ENCODE measurements at regions of chr16 and their contacts with region 1.

Region 1: GRCh38 chr16:56600398-56600999 is 7.9 kb upstream of the MT2A start:
- DNase-seq: peak; percentile 60
- ATAC-seq: peak; percentile 72
- H3K4me3 Mint-ChIP-seq: no peak overlapping the region
- H3K27ac Mint-ChIP-seq: no peak overlapping the region
- H3K4me1 Mint-ChIP-seq: peaks cover 7% of the 10 kb centered on the region
- H3K27me3 Mint-ChIP-seq: peaks cover 16% of the 10 kb centered on the region

Region 2: GRCh38 chr16:56115817-56116576 is 484.5 kb before region 1 on chr16:
- CTCF ChIA-PET with region 1: no interaction called
- POLR2A ChIA-PET with region 1: no interaction called
- DNase-seq: no peak
- ATAC-seq: no peak
- H3K4me3 Mint-ChIP-seq: no peak overlapping the region
- H3K27ac Mint-ChIP-seq: no peak overlapping the region
- H3K4me1 Mint-ChIP-seq: peaks cover 5% of the 10 kb centered on the region
- H3K27me3 Mint-ChIP-seq: peaks cover 20% of the 10 kb centered on the region

Region 3: GRCh38 chr16:56294579-56294978 is 305.9 kb before region 1 on chr16:
- CTCF ChIA-PET with region 1: no interaction called
- POLR2A ChIA-PET with region 1: no interaction called
- DNase-seq: no peak
- ATAC-seq: no peak
- H3K4me3 Mint-ChIP-seq: no peak overlapping the region
- H3K27ac Mint-ChIP-seq: no peak overlapping the region
- H3K4me1 Mint-ChIP-seq: no peaks in the 10 kb centered on the region
- H3K27me3 Mint-ChIP-seq: peaks cover 2% of the 10 kb centered on the region

Region 4: GRCh38 chr16:56589141-56590039 is 11.1 kb before region 1 on chr16 and contains the start of gene MT3:
- CTCF ChIA-PET with region 1: interaction called, 11 read pairs
- POLR2A ChIA-PET with region 1: no interaction called
- DNase-seq: peak; percentile 39
- ATAC-seq: peak; percentile 85
- H3K4me3 Mint-ChIP-seq: peak within 1 kb of the TSS; percentile 79
- H3K27ac Mint-ChIP-seq: peak within 1 kb of the TSS; percentile 21
- H3K4me1 Mint-ChIP-seq: peaks cover 19% of the 10 kb centered on the region
- H3K27me3 Mint-ChIP-seq: peaks cover 48% of the 10 kb centered on the region
- total RNA-seq, gene MT3: 6.2 to 7.5 TPM

Region 5: DNA sequence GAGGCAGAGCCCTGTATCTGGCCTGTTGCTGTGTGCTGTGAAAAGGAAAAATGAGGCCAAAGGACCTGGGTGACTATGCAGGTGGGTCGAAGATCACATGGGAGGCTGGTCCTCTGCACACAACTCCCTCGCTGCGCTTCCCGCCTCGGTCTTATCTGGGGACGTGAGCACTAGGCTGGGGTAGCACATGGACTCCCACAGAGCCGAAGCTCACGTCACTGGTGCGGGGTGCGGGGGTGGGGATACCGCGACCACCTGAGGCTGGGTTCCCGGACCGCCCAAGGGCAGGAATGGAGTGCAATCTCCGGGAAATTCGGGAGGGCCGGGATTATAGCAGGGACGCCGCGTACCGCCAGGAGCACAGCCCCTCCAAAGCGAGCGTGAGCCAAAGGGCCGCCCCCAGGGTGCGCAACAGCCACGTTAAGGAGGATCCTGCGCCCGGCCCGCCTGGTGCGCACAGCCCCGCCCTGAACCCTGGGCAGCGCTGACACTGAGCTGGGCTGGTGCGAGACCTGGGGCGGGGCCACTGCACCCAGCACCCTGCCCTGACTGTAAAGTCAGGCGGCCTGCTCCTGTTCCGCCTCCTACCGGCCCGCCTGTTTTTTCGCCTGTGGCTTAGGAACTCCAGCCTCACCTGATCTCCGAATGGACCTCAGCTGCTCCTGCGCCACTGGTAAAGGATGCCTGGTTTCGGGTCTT is 42.7 kb after region 1 on chr16:
- CTCF ChIA-PET with region 1: interaction called, 11 read pairs
- POLR2A ChIA-PET with region 1: no interaction called
- DNase-seq: peak; percentile 87
- ATAC-seq: peak; percentile 100
- H3K4me3 Mint-ChIP-seq: peak overlapping the region; percentile 66
- H3K27ac Mint-ChIP-seq: no peak overlapping the region
- H3K4me1 Mint-ChIP-seq: peaks cover 28% of the 10 kb centered on the region
- H3K27me3 Mint-ChIP-seq: peaks cover 69% of the 10 kb centered on the region

Measured in activated CD8-positive, alpha-beta T cell treated with anti-CD3 and anti-CD28 coated beads, Interleukin-2, amount 10 ng/mL, durations not matched to agents 7 days and 5 days (primary cell).